Heart left ventricle (tissue), 16 donors: ENCODE measurements at regions of chr6 and their contacts with region 1.

Region 1: DNA sequence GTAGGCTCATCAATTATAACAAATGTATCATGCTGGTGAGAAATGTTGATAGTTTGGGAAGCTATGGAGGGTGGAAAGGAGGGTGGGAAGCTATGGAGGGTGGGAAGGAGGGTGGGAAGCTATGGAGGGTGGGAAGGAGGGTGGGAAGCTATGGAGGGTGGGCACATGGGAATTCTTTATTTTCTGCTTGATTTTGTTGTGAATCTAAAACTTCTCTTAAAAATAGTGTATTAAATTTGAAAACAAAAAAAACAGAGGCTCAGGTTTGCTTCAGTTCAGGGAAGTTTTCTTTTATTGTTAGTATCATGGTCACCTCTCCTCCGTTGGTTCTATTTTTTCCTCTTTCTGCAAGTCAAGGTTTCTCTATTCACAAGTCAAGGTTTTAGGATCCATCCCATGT is 106.4 kb downstream of the SOD2 start:
- DNase-seq: no peak
- ATAC-seq: no peak
- H3K4me3 ChIP-seq: no peak overlapping the region
- H3K27ac ChIP-seq: no peak overlapping the region
- H3K4me1 ChIP-seq: no peaks in the 10 kb centered on the region
- H3K27me3 ChIP-seq: no peaks in the 10 kb centered on the region
- CTCF ChIP-seq: no peak
- POLR2A ChIP-seq: no peak

Region 2: GRCh38 chr6:159604443-159604956 is 17.8 kb after region 1 on chr6:
- intact Hi-C with region 1: loop called in 1 of 10 experiments (anchors 1 kb)
- DNase-seq: no peak
- ATAC-seq: no peak
- H3K4me3 ChIP-seq: no peak overlapping the region
- H3K27ac ChIP-seq: no peak overlapping the region
- H3K4me1 ChIP-seq: peaks cover 0 to 3% (median 0%) of the 10 kb centered on the region in 12 donors
- H3K27me3 ChIP-seq: no peaks in the 10 kb centered on the region
- CTCF ChIP-seq: no peak
- POLR2A ChIP-seq: no peak

Region 3: DNA sequence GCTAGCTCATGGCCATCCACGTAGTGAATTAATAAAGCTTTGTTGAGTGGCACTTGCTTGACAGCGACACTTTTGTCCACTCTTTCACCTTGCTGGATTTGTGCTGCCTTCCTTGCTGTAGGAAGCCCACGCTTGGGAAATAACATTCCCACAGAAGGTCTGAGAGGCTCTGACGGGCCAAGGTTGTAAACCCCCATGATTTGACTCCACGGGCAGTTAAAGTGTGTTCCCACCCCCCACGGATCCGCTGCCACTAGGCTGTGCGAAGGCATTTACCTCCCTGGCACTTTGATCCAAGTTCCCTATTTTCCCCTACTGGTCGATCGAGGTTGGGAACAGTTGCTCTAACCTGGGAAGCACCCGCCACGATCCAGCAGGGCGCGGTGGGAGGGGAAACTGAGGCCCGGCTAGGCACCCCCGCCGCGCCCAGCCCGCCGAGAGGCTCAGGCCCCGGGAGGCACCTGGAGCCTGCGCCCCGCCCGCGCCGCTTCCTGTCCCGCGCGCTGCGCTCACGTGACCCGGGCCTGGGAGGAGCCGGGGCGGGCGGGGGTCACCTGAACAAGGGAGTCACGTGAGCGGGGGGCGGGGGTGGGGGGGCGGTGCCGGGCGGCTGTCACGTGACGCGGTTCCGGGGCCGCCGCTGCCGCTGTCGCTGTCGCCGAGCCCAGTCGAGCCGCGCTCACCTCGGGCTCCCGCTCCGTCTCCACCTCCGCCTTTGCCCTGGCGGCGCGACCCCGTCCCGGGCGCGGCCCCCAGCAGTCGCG is 381.9 kb after region 1 on chr6 and contains the start of gene IGF2R:
- intact Hi-C with region 1: no loop called
- DNase-seq: peak; percentile 94 to 96 (median 95)
- ATAC-seq: peak; percentile 81 to 96 (median 94)
- H3K4me3 ChIP-seq: peak within 1 kb of the TSS; percentile 76 to 99 (median 94)
- H3K27ac ChIP-seq: peak within 1 kb of the TSS; percentile 71 to 96 (median 92)
- H3K4me1 ChIP-seq: peaks cover 0 to 60% (median 34%) of the 10 kb centered on the region in 12 donors
- H3K27me3 ChIP-seq: no peaks in the 10 kb centered on the region
- CTCF ChIP-seq: peak in 4 of 12 donors; percentile 13 to 39 (median 16)
- POLR2A ChIP-seq: peak in 1 of 2 donors; percentile 88
- total RNA-seq, gene IGF2R: 49.3 to 111 (median 74.0) TPM